Heart right ventricle (tissue), 16 donors: ENCODE measurements at regions of chr12 and their contacts with region 1.

Region 1: DNA sequence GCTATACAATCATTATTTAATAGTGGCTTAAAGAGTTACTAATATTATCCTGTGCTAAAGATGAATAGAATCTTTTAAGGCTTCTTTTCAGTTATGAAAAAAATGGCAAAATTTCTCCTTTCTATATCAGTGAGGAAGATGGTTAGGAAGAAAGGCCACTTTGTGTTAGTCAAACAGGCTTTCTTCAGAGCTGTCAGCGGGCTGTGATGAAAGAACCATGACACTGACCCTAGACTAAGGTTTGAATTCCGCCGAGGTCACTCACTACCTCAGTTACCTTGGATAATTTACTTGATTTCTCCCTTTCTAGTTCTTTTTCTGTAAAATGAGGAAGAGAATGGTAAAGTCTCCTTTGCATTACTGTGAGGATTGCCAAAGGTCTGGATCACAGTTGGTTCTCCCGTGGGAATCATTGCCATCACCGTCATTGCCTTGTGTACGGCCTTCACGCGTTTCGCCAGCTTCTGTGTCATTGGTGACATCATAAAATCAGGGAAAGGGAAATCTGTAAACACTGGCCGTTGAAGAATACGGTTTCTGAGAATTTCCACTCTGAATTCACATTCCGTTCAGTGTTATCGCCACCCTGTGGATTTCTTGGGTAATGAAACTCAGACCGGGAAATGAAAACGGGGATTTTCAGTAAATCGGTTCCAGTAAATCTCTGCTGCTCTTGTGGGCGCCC is 26.7 kb upstream of the YBX3 start:
- DNase-seq: peak; percentile 20 to 87
- ATAC-seq: peak; percentile 64 to 96 (median 92)
- H3K4me3 ChIP-seq: peak overlapping the region in 8 of 10 donors; percentile 8 to 46 (median 44)
- H3K27ac ChIP-seq: peak overlapping the region in 6 of 10 donors; percentile 11 to 62 (median 42)
- H3K4me1 ChIP-seq: peaks cover 0 to 16% (median 3%) of the 10 kb centered on the region in 9 donors
- H3K27me3 ChIP-seq: peaks cover 0 to 7% (median 0%) of the 10 kb centered on the region in 7 donors
- CTCF ChIP-seq: peak; percentile 78 to 98 (median 88)

Region 2: DNA sequence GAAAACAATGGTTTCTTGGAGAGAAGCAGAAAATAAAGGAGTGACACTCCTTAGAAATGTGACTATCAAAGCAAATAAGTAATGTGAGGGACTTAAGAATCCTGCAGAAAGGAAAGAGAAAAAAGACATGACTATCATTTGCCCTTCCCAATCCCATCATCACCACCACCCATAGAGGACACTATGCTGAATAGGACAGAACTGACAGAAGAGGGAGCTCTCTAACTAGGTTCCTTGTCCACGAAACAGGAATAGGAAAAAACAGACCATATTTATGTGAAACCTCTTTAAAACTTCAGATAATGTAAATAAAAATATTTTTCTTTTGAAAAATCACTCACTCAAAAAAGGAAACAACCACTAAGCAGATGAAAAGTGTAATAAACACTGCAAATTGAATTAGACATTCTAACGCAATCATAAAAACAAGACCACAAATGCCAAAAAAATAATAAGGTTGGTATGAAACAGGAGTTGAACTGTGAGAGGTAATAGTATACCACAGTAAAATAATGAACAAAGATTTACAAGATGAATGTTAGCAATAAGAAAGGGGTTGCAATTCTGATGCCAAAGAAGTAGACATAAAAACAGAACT is 418.1 kb before region 1 on chr12:
- intact Hi-C with region 1: loop called in 1 of 10 experiments (anchors 10 kb)
- DNase-seq: no peak
- ATAC-seq: peak in 6 of 8 donors; percentile 64 to 74 (median 70)
- H3K4me3 ChIP-seq: no peak overlapping the region
- H3K27ac ChIP-seq: no peak overlapping the region
- H3K4me1 ChIP-seq: no peaks in the 10 kb centered on the region
- H3K27me3 ChIP-seq: no peaks in the 10 kb centered on the region
- CTCF ChIP-seq: peak; percentile 33 to 84 (median 73)

Region 3: DNA sequence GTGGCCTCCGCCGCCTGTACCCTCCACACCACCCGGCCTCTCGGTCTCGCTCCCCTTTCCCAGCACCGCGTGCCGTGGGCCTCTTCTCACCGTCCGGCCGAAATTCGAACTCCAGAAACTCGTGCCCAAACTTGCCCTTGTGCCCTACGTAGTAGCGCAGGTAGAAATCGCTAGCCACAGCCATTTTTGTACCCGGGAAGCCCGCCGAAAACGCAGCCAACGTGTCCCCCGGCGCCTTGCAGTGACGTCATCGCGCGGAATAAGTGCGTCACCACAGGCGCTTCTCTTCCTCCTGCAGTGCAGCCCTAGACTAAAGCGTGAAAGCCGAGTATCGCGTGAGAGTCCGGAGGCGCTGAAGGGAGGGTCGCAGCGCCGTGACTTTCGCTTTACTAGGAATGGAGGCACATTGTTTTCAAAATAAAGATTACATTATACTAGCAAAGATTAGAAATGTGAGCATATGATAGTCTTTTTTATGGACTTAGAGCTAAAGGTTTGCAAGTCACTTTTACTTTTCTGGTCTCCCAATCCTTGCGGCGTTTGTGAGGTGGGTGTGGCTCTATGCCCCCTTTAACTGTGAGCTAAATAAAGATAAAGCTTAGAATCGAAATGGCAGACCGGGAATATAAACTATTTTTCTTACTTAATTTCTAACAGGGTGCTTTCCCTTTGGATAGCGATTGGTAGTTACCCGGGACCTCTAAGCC is 136.3 kb before region 1 on chr12 and contains the start of gene MAGOHB:
- intact Hi-C with region 1: loop called (anchors 1 to 10 kb)
- DNase-seq: peak; percentile 97
- ATAC-seq: peak; percentile 99 to 100 (median 99)
- H3K4me3 ChIP-seq: peak within 1 kb of the TSS; percentile 62 to 97 (median 83)
- H3K27ac ChIP-seq: peak within 1 kb of the TSS; percentile 11 to 95 (median 87)
- H3K4me1 ChIP-seq: peaks cover 0 to 24% (median 14%) of the 10 kb centered on the region in 9 donors
- H3K27me3 ChIP-seq: peaks cover 0 to 5% (median 0%) of the 10 kb centered on the region in 7 donors
- CTCF ChIP-seq: no peak
- total RNA-seq, gene MAGOHB: 10.9 to 17.1 (median 13.4) TPM

Region 4: GRCh38 chr12:10652192-10652591 is 97.7 kb before region 1 on chr12:
- intact Hi-C with region 1: no loop called
- DNase-seq: no peak
- ATAC-seq: no peak
- H3K4me3 ChIP-seq: no peak overlapping the region
- H3K27ac ChIP-seq: no peak overlapping the region
- H3K4me1 ChIP-seq: no peaks in the 10 kb centered on the region
- H3K27me3 ChIP-seq: no peaks in the 10 kb centered on the region
- CTCF ChIP-seq: no peak

Region 5: DNA sequence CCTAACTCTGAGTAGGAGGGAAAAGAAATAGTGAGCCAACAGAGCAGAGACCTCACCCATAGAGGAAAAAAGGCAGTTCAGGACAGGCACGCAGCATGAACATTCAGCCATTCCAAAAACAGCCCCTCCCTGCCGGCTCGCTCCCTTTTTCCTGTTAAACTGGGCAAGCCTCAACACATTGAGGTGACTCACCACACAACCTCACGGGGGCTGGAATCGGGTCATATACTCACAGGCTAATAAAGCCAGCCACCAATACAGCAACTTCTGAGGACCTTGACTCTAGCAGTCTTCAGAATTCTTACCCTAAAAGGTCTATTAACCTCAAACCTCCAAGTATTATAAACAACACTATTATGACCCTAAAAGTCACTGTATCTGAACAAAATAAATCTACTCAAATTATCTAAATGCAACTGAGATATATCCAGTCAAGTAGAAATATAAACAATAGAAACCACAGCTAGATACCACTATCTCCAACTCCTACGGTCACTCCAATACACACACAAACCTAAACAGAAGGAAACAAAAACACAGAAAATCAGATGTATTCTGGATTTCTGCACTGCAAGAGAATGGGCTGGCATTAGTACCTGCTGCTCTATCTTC is 33.0 kb before region 1 on chr12:
- intact Hi-C with region 1: loop called in 3 of 10 experiments (anchors 1 to 5 kb)
- DNase-seq: peak; percentile 67 to 88
- ATAC-seq: peak; percentile 82 to 94 (median 90)
- H3K4me3 ChIP-seq: peak overlapping the region in 6 of 10 donors; percentile 7 to 19 (median 8)
- H3K27ac ChIP-seq: peak overlapping the region; percentile 40 to 100 (median 97)
- H3K4me1 ChIP-seq: peaks cover 20 to 63% (median 59%) of the 10 kb centered on the region in 9 donors
- H3K27me3 ChIP-seq: no peaks in the 10 kb centered on the region
- CTCF ChIP-seq: no peak

Region 6: DNA sequence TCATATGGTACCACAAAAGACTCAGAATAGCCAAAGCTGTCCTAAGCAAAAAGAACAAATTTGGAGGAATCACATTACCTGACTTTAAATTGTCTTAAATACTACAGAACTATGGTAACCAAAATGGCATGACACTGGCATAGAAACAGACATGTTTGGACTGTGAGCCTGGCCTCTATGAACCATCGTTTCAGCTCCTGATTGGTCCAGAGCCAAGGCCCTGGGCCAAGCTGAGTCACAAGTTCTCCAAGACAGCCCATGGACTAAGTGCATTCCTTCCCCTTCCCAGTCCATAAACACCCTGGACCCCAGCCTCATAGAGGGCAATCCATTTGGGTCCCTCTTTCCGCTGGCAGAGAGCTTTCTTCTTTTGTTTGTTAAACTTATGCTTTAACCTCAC is 111.5 kb after region 1 on chr12:
- intact Hi-C with region 1: no loop called
- DNase-seq: no peak
- ATAC-seq: no peak
- H3K4me3 ChIP-seq: no peak overlapping the region
- H3K27ac ChIP-seq: no peak overlapping the region
- H3K4me1 ChIP-seq: no peaks in the 10 kb centered on the region
- H3K27me3 ChIP-seq: no peaks in the 10 kb centered on the region
- CTCF ChIP-seq: no peak